Common myeloid progenitor, CD34-positive (primary cell): ENCODE measurements at regions of chr1 and their contacts with region 1.

Region 1: GRCh38 chr1:2539312-2539907 is 9.3 kb upstream of the HES5 start:
- DNase-seq: peak in 1 of 3 donors; percentile 28
- H3K4me3 ChIP-seq: no peak overlapping the region
- H3K27ac ChIP-seq: no peak overlapping the region
- H3K4me1 ChIP-seq: peaks cover 0 to 30% (median 27%) of the 10 kb centered on the region in 4 experiments
- H3K27me3 ChIP-seq: peaks cover 0 to 53% (median 2%) of the 10 kb centered on the region in 5 experiments

Region 2: DNA sequence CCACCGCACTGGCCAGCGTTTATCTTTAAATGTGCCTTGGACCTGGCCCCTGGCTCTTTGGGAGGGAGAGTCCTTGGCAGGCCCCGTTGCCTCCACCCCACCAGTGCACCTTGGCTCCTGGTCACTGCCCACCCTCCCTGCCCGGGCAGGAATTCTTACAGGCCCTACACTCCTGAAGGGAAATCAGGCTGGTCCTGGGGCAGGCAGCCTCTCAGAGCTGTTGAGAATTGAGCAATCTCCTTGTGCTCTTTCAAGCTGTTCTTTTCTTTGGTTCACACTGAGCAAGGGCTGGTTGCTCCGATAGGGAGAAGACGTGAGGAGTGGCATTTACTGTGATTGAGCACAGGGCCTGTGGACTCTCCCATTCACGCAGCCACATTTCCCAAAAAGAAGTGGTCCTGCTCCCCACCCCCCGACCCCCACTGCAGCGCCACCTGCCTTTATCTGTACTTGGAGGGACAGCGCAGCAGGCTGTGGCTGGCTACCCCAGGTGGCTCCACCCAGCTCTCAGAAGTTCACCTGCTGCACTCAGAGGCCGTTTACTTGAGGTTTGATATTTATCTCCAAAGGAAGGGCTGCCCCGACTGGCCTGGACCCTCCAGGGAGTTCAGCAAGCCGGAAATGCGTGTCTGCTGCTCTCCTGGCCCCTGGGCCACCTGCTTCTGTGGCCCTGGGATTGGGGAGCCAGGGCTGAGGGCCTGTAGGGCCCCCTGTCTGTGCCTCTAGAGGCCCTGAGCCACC is 263.4 kb before region 1 on chr1:
- CTCF ChIA-PET with region 1: no interaction called
- POLR2A ChIA-PET with region 1: no interaction called
- DNase-seq: peak in 2 of 3 donors; percentile 47 to 48
- H3K4me3 ChIP-seq: no peak overlapping the region
- H3K27ac ChIP-seq: no peak overlapping the region
- H3K4me1 ChIP-seq: peaks cover 0 to 65% (median 52%) of the 10 kb centered on the region in 4 experiments
- H3K27me3 ChIP-seq: no peaks in the 10 kb centered on the region

Region 3: DNA sequence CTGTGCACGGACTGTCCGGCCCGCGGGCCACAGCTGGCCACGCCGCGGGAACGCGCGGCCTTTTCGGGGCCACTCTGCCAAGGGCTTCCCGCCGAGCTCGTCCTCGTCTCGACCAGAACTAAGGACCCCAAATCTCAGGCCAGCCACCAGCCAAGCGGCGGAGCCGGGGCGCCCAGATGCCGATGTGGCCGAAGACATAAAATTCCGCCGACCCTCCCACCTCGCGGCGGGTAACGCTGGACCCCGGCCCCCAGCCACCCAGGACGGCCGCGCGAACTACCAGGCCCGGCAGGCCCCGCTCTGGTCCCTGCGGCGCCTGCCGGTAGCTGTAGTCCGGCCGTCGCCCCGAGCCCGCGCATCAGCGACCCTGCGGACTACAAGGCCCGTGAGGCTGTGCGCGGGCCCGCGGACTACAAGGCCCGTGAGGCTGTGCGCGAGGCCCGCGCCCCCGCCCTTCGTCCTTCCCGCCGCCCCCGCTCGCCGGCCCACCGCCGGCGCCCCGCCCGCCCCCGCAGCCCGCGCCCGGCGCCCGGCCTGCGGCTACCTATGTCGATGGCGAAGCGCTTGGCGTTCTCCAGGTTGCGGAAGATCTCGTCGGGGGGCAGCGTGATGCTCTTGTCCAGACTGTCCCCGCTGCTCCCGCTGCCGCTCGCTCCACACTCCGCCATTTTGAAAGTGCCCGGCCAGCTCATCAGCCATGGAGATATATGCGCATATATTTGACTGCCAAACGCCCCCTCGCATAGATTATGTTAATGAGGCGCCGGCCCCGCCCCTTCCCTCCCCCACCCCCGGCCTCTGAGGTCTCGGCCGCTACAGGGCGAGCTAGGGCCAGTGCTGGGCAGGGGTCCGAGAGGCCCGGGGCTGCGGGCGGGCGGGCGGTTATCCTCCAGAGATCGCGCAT is 13.2 kb before region 1 on chr1 and contains the start of gene PANK4:
- CTCF ChIA-PET with region 1: interaction called, 52 read pairs
- POLR2A ChIA-PET with region 1: interaction called, 4 read pairs
- DNase-seq: peak; percentile 92 to 95 (median 95)
- H3K4me3 ChIP-seq: peak within 1 kb of the TSS; percentile 63 to 95 (median 81)
- H3K27ac ChIP-seq: peak within 1 kb of the TSS; percentile 74 to 82
- H3K4me1 ChIP-seq: peaks cover 6 to 57% (median 48%) of the 10 kb centered on the region in 4 experiments
- H3K27me3 ChIP-seq: peaks cover 0 to 41% (median 10%) of the 10 kb centered on the region in 5 experiments

Region 4: GRCh38 chr1:2561898-2562545 is 22.6 kb after region 1 on chr1:
- CTCF ChIA-PET with region 1: no interaction called
- POLR2A ChIA-PET with region 1: no interaction called
- DNase-seq: no peak
- H3K4me3 ChIP-seq: no peak overlapping the region
- H3K27ac ChIP-seq: no peak overlapping the region
- H3K4me1 ChIP-seq: peaks cover 0 to 17% (median 12%) of the 10 kb centered on the region in 4 experiments
- H3K27me3 ChIP-seq: no peaks in the 10 kb centered on the region

Region 5: DNA sequence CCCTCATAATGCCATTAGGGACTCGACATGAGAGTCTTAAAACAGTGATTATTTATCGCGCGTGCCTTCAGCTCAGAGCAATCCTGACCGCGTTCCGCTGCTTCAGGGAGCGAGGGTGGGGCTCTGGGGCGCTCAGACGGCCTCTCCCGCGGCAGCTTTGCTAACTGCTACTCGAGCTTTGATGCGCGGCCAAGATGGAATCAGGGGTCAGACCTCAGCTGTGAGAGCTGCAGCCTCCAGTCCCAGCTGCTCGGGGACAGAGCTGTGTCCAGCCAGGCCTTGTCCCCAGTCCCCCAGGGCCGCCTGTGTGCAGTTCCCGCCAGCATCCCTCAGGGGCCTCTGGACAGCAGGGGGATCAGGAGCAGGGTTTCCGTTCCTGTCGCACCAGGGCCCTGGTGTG is 366.7 kb after region 1 on chr1:
- CTCF ChIA-PET with region 1: no interaction called
- POLR2A ChIA-PET with region 1: no interaction called
- DNase-seq: no peak
- H3K4me3 ChIP-seq: no peak overlapping the region
- H3K27ac ChIP-seq: no peak overlapping the region
- H3K4me1 ChIP-seq: no peaks in the 10 kb centered on the region
- H3K27me3 ChIP-seq: peaks cover 0 to 4% (median 0%) of the 10 kb centered on the region in 5 experiments